Activated naive CD4-positive, alpha-beta T cell treated with anti-CD3 and anti-CD28 coated beads for 36 hours (primary cell): ENCODE measurements at regions of chr12 and their contacts with region 1.

Region 1: DNA sequence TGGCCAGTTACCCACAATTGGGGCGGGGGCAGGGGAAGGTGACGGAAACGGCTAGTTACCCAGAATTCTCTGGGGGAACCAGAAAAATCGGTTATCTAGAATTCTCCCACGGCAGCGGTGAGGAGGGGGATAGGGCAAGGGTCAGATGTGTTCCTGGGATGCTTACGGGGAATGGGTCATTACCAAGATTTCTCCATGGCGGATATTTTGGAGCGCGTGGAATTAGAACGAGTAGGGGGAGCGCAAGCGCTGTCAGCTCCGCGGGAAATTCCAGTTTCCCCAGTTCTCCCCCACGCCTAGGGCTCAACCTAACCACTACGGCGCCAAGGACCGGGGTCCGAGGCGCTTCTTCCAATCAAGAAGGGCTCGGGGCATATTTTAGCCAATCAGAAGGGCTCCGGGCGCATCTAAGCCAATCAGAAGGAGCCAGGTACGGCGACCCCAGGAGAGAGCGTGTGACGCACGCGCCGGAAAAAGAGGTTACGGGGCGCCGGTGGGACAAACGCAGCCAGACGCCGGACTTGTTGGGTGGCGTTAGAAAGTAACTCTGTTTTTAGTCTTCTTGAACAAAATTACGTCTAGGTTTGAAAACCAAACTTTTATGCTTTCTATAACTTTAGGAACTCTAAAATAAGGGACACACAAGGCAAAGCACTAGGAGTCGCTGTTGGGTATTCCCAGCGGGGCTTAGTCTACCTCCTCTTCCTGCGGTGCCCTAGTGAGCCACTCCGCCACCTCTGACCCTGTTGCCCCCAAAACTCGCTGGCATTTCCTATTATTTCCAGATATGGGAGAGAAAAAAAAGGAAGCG is at the start of gene PAN2:
- DNase-seq: peak; percentile 98
- H3K4me3 Mint-ChIP-seq: peak within 1 kb of the TSS; percentile 97
- H3K27ac Mint-ChIP-seq: peak within 1 kb of the TSS; percentile 100
- H3K4me1 Mint-ChIP-seq: peaks cover 44% of the 10 kb centered on the region
- H3K27me3 Mint-ChIP-seq: no peaks in the 10 kb centered on the region
- total RNA-seq, gene PAN2: 82.7 to 85.4 TPM

Region 2: GRCh38 chr12:54411391-54412241 is 1922.3 kb before region 1 on chr12:
- CTCF ChIA-PET with region 1: no interaction called
- intact Hi-C with region 1: loop called (anchors 5 kb)
- DNase-seq: peak; percentile 71
- H3K4me3 Mint-ChIP-seq: peak overlapping the region; percentile 38
- H3K27ac Mint-ChIP-seq: peak overlapping the region; percentile 96
- H3K4me1 Mint-ChIP-seq: peaks cover 58% of the 10 kb centered on the region
- H3K27me3 Mint-ChIP-seq: no peaks in the 10 kb centered on the region

Region 3: DNA sequence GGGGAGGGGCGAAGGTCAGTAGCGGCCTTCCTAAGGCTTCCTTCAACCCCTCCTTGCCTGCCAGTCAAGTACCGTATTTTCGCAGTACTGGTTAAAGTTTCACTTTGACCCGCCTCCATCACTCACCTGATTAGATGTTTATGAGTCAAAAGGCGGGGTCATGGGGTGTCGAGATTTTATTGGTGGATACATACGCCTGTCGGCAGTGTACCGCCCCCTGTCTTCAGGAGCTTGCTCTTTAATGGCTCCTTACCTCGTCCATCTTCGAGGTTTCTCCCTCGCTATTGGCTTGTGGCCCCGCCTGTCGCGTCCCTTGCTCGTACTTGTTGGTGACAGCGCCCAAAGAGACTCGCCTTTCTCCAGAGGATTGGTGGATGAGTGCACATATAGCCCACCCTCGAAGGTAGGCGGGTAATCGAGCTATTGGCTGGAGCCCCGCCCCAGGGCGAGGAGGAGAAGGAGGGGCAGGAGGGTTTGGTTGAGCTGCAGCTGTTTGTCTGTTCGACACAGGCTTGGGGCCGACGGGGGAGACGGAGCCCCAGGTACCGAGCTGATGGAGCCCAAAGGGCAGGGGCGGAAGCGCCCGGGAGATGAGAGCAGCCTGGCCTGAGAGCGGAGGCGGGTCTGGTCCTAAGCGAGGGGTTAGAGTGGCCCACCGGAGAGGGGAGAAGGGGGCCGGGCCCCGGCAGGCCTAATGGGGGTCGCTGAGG is 360.1 kb before region 1 on chr12 and contains the start of gene RAB5B:
- CTCF ChIA-PET with region 1: no interaction called
- intact Hi-C with region 1: loop called (anchors 10 kb)
- DNase-seq: peak; percentile 99
- H3K4me3 Mint-ChIP-seq: no peak within 1 kb of the TSS
- H3K27ac Mint-ChIP-seq: no peak within 1 kb of the TSS
- H3K4me1 Mint-ChIP-seq: peaks cover 24% of the 10 kb centered on the region
- H3K27me3 Mint-ChIP-seq: no peaks in the 10 kb centered on the region
- total RNA-seq, gene RAB5B: 33.2 to 35.7 TPM

Region 4: DNA sequence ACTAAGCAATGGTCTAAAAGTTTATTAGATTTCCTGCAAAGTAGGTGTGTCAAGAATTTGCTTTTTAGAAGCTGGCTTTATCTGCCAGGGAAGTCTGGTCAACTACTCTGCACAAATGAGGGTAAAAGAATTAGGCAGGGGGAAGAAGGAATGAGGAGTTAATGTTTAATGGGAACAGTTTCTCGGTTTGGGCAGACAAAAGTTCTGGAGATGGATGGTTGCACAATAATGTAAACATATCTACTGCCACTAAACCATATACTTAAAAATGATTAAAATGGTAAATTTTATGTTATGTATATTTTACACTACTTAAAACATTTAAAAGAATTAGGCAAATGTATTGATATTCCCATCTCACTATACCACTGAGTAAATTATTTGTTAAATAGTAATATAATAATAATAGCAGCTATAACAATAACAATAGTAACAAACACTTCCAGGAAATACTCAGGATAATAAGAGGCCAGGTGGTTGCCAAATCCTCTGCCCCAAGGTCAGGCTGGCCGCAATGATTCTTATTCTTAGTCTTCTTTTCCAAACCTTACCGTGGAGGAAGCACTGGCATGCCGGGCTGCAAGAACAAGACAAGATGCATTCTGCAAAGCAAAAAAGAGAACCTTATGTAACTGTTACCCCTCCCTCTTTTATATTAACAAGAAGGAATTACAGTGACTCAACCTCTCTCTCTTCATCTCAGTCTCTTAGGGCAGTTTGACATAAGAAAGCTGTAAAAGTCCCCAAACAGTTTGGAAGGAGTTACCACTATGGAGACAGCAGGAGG is 47.6 kb before region 1 on chr12:
- CTCF ChIA-PET with region 1: interaction called, 3 read pairs
- intact Hi-C with region 1: loop called (anchors 2 kb)
- DNase-seq: no peak
- H3K4me3 Mint-ChIP-seq: no peak overlapping the region
- H3K27ac Mint-ChIP-seq: peak overlapping the region; percentile 44
- H3K4me1 Mint-ChIP-seq: peaks cover 14% of the 10 kb centered on the region
- H3K27me3 Mint-ChIP-seq: no peaks in the 10 kb centered on the region

Region 5: GRCh38 chr12:56321027-56321426 is 12.9 kb before region 1 on chr12:
- CTCF ChIA-PET with region 1: interaction called, 8 read pairs
- intact Hi-C with region 1: loop called (anchors 1 kb)
- DNase-seq: peak; percentile 50
- H3K4me3 Mint-ChIP-seq: no peak overlapping the region
- H3K27ac Mint-ChIP-seq: peak overlapping the region; percentile 70
- H3K4me1 Mint-ChIP-seq: peaks cover 5% of the 10 kb centered on the region
- H3K27me3 Mint-ChIP-seq: no peaks in the 10 kb centered on the region

Region 6: DNA sequence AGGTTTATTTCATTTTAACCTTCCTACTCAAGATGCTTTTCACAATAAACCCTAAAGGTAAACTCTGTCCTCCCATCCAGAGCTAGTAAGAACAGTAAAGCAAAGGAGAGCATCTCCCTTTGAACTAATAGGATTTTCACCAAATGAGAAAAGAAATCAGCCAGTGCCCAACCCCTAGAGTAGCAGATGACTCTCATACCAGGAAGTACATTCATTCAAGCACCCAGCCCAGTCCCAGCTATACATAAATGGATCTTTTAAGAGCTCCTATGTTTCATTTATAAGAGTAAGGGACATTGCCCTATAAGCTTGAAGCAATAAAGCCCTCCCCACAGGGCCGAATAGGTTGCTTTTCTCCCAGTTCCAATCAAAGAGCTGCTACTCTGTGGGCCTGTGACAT is 288.7 kb after region 1 on chr12:
- CTCF ChIA-PET with region 1: no interaction called
- intact Hi-C with region 1: no loop called
- DNase-seq: peak; percentile 27
- H3K4me3 Mint-ChIP-seq: no peak overlapping the region
- H3K27ac Mint-ChIP-seq: no peak overlapping the region
- H3K4me1 Mint-ChIP-seq: peaks cover 55% of the 10 kb centered on the region
- H3K27me3 Mint-ChIP-seq: no peaks in the 10 kb centered on the region

Region 7: DNA sequence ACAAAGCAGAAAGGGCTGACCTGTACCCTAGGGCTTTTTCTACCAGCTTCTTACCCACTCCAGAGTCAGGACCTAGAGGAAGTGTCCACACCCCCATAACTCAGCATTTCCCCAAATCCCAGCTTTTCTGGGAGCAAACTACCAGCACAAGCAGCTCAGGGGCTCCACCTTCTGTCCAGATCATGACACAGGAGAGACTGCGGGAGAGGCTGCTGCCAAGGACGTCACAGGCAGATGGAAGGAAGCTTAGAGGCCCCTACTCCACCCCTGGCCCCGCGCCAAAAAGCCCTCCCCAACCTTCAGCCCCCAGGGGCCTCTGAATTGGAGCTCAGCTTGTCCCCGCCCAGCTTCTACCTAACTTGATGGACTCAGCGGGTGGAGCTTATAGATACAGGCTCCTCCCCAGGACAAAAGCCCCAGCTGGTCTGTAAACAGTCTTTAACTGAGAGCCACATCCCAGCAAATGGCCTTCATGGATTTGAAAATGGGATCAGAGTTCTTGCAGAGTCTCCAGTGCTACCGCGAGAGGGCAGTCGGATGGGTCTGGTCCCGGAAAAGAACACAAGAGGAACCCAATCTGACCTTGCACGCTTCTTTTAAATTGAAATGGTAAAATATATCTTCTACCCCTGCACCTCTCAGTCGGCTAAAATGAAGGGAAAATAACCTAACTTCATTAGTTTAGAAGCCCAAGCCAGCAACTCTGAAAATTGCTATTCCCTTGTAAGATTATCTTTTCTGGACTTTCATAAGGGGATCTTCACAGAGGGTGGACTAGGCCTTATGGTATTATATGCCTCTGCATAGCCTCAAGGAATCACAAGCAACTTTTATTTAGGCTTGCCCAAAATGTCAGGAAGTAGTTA is 303.0 kb after region 1 on chr12:
- CTCF ChIA-PET with region 1: no interaction called
- intact Hi-C with region 1: loop called (anchors 5 kb)
- DNase-seq: peak; percentile 97
- H3K4me3 Mint-ChIP-seq: peak overlapping the region; percentile 86
- H3K27ac Mint-ChIP-seq: peak overlapping the region; percentile 91
- H3K4me1 Mint-ChIP-seq: peaks cover 62% of the 10 kb centered on the region
- H3K27me3 Mint-ChIP-seq: no peaks in the 10 kb centered on the region